ENCODE measurements at regions of chr1 and their contacts with region 1.

Region 1: DNA sequence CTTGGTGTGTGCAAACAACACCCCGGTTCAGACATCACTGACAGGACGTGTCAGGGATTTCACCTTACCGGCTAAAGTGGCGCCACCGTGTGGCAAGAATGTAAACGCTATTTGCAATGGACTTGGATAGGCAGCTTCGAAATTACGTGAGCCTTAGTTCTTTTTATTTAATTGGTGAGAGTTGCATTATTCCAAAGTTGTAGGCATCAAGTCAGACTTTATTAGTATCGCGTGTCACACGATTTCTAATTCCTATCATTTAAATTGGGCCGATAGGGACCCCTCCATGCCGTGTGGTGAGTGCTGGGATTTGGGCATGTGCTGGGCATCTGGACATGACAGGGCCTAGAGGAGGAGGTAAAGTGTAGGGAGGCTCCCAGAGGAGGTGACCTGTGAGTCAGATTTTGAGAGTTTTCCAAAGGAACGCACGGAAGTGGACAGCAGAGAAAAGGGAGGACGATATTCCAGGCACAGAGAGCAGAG is 14.5 kb upstream of the CPT2 start:
- DNase-seq: peak; percentile 84
- CTCF ChIP-seq: peak; percentile 88

Region 2: DNA sequence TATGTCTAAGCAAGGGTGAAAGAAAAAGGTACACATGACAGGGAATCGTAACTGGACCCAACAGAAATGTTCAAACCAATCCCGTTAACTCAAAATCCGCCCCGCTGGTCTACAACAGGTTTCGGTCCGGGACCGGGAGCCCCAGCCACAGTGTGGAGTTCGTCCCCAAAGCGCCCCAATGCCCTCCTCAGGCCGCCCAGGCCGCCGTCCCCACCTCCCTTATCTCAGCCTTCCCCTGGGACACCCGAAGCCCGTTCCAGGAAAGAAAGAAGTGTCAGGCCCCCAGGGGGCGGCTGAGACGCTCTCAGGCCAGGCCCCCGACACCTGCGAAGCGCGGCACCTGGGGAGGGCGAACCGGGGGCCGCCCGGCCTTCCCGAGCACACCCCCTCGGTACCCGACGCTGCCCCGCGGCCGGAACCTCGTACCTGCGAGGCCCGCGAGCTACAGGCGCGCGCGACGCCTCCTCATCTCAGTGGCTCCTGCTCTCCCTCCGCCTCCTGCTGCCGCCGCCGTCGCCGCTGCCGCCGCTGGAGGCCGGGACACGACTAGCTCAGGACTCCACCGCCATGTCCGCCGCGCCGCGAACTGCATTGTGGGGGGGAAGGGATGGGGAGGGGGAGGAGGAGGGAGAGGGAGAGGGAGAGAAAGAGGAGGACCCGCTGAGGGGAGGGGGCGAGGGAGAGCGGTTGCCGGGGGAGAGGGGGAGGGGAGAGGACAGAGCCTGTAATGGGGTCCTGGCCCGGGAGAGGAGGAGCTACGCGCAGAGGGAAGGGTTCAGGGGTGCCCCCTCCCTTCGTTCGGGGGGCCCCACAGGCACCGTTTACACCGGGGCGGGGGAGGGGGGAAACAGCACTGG is 629.4 kb before region 1 on chr1 and contains the start of gene TUT4:
- in situ Hi-C with region 1: no loop called
- DNase-seq: peak; percentile 77
- CTCF ChIP-seq: peak; percentile 20

Region 3: GRCh38 chr1:52702886-52703787 is 479.0 kb before region 1 on chr1:
- in situ Hi-C with region 1: loop called (anchors 10 kb)
- DNase-seq: peak; percentile 87
- CTCF ChIP-seq: no peak

Region 4: DNA sequence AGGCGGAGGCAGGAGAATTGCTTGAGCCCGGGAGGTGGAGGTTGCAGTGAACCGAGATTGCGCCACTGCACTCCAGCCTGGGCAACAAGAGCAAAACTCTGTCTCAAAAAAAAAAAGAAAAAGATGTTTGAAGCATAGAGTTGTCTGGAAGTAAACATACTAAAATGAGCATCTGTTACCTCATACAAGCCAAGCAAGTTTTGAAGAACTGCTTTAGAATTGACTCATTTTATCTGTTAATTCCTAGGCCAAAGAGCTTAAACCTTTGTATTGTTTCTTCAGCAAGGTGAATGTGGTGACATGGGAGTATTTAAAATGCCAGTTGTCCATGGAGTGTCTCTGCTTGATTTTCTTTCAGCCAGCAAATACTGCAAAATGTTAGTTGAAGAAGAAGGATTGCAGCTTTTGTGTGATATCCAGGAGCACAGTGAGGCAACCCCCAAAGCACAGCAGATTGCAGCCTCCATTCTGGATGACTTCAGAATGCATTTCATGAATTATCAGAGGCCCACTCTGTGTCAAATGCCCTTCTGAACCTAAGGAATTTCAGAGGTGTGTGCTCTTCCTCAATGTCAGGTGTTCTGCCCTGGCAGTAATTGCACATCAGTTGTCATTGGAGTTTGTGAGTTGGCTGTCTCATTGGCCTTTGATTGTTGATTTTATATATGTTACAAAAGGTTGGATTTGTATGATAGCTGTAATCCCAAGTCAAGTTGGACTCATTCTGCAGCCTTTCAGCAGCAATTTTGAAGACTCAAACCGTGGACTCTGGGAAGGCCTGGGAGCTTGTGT is 289.5 kb before region 1 on chr1:
- in situ Hi-C with region 1: no loop called
- DNase-seq: no peak
- CTCF ChIP-seq: no peak

Region 5: GRCh38 chr1:52913537-52913936 is 268.6 kb before region 1 on chr1:
- in situ Hi-C with region 1: loop called (anchors 10 kb)
- DNase-seq: no peak
- CTCF ChIP-seq: peak; percentile 13

Region 6: GRCh38 chr1:53294567-53294966 is 112.4 kb after region 1 on chr1:
- in situ Hi-C with region 1: no loop called
- DNase-seq: peak; percentile 52
- CTCF ChIP-seq: no peak

Region 7: DNA sequence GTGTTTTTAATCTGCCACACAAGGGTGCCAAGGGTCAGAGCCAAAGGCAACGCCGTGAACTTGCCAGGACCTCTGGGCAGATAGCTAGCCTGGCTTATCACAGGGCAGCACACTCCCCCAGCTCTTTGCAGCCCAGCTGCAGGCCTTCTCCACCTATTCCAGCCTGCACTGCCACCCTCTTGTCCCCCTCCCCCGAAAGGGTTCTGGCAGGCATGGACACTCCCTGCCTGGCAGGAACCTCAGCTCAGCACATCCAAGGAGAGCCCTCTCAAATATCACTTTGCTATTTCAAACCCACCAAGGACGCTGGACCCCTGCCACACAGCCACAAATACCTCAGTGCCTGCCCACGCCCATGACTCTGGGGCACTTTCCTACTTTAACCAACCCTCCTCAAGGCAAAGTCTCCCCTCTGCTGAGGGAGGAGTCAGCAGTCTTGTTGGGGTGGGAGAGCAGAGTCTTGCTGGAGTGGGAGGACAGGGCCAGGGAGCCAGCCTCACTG is 1215.0 kb after region 1 on chr1:
- in situ Hi-C with region 1: no loop called
- DNase-seq: no peak
- CTCF ChIP-seq: no peak

Measured in GM13977 (cell line).